ENCODE measurements at regions of chr14 and their contacts with region 1.

Region 1: GRCh38 chr14:70972107-70972976 is 65.1 kb downstream of the PCNX1 start:
- DNase-seq: peak; percentile 97
- H3K4me3 ChIP-seq: no peak overlapping the region
- H3K27ac ChIP-seq: no peak overlapping the region
- H3K4me1 ChIP-seq: peaks cover 0 to 8% (median 7%) of the 10 kb centered on the region in 4 donors
- H3K27me3 ChIP-seq: no peaks in the 10 kb centered on the region
- CTCF ChIP-seq: peak; percentile 88 to 94 (median 89)
- EP300 ChIP-seq: no peak
- POLR2A ChIP-seq: no peak

Region 2: DNA sequence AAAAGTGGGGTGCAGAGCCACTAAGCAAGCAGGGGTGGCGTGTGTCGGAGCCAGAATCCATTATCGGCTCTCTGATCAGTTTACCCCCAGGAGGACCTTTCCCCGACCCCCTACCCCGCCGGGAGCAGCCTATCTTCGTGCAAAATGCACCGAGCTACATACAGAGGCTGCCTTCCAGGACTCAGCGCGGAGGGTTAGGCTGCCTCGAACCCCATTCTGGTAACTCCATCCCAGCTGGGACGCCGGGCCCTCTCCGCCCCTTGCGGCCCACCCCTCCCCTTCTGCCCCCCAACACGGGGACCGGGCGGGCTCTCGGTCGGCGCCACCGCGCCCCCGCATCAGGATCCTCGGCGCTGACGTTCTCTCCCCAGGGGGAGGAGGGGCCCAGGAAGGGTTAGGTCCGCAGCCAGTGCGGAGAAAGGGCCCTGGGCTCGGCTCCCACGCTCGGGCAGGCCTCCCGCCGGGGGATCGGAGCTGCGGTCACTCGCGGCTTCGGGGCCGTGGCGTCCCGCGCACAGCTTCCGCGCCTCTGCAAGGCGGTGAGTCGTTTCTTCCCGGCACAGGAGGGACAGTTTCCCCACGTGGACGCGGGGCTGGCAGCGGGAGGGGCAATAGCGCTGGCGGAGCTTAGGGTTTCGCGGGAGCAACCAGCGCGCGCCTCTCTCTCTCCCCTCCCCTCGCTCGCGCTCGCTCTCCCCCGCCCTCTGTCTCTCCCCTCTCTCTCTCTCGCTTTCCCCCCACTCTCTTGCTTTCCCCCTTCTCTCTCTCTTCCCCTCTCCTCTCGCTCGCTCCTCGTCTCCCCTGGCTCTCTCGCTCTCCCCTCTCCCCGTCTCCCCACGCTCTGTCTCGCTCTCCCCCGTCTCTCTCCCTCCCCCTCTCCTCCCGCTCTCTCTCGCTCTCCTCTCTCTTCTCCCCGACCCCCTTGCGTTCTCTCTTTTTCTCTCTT is 150.5 kb before region 1 on chr14:
- intact Hi-C with region 1: loop called (anchors 5 kb)
- DNase-seq: no peak
- H3K4me3 ChIP-seq: peak overlapping the region; percentile 58 to 76 (median 68)
- H3K27ac ChIP-seq: peak overlapping the region in 3 of 4 donors; percentile 32 to 40 (median 39)
- H3K4me1 ChIP-seq: peaks cover 15 to 32% (median 25%) of the 10 kb centered on the region in 4 donors
- H3K27me3 ChIP-seq: peaks cover 0 to 29% (median 0%) of the 10 kb centered on the region in 4 donors
- CTCF ChIP-seq: no peak
- EP300 ChIP-seq: no peak
- POLR2A ChIP-seq: no peak

Region 3: GRCh38 chr14:70873627-70874026 is 98.7 kb before region 1 on chr14:
- intact Hi-C with region 1: loop called (anchors 5 kb)
- DNase-seq: no peak
- H3K4me3 ChIP-seq: no peak overlapping the region
- H3K27ac ChIP-seq: no peak overlapping the region
- H3K4me1 ChIP-seq: no peaks in the 10 kb centered on the region
- H3K27me3 ChIP-seq: no peaks in the 10 kb centered on the region
- CTCF ChIP-seq: peak; percentile 28 to 39 (median 30)
- EP300 ChIP-seq: no peak
- POLR2A ChIP-seq: no peak

Region 4: GRCh38 chr14:70894868-70895267 is 77.5 kb before region 1 on chr14:
- intact Hi-C with region 1: no loop called
- DNase-seq: no peak
- H3K4me3 ChIP-seq: no peak overlapping the region
- H3K27ac ChIP-seq: no peak overlapping the region
- H3K4me1 ChIP-seq: peaks cover 11 to 43% (median 30%) of the 10 kb centered on the region in 4 donors
- H3K27me3 ChIP-seq: no peaks in the 10 kb centered on the region
- CTCF ChIP-seq: no peak
- EP300 ChIP-seq: no peak
- POLR2A ChIP-seq: no peak

Region 5: DNA sequence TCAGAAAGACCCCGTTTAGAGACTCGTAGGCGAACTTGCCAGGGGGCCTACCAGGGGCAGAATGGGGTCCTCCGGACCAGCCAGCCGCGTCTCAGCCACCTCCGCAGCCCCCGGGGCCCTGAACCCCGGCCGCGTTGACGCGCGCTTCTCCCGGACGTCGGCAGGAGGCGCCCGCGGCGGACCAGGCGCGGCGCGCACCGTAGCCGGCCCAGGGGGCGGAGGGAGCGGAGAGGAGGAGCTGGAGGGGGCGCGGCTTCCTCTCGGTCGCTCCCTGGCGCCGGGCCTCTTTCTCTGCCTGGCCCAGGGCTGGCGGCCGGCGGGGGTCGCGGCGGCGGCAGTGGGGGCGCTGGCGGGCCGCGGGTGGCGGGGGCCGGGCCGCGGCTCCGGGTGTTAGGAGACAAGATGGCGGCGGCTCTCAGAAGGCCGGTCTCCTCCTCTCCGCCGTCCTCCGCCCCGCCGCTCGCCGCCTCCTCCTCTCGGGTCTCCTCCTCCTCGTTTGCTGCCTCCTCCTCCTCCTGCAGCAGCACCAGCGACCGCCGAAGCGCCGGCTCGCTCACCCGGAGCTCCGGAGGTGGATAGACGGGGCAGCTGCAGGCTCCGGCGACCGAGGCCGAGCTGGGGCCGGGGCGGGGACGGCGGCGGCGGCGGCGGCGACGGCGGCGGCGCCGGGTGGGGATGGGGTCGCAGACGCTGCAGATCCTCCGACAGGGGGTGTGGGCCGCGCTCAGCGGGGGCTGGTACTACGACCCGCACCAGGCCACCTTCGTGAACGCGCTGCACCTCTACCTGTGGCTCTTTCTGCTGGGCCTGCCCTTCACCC is 65.0 kb before region 1 on chr14 and contains the start of gene PCNX1:
- intact Hi-C with region 1: loop called (anchors 5 kb)
- DNase-seq: peak; percentile 95
- H3K4me3 ChIP-seq: peak within 1 kb of the TSS; percentile 90 to 100 (median 96)
- H3K27ac ChIP-seq: peak within 1 kb of the TSS; percentile 93 to 95 (median 94)
- H3K4me1 ChIP-seq: peaks cover 47 to 61% (median 51%) of the 10 kb centered on the region in 4 donors
- H3K27me3 ChIP-seq: no peaks in the 10 kb centered on the region
- CTCF ChIP-seq: peak in 2 of 3 experiments; percentile 87 to 89
- EP300 ChIP-seq: no peak
- POLR2A ChIP-seq: no peak
- total RNA-seq, gene PCNX1: 56.3 to 62.5 (median 59.6) TPM

Measured in esophagus muscularis mucosa (tissue), 4 donors.